CD8-positive, alpha-beta T cell (primary cell): ENCODE measurements at regions of chr14 and their contacts with region 1.

Region 1: DNA sequence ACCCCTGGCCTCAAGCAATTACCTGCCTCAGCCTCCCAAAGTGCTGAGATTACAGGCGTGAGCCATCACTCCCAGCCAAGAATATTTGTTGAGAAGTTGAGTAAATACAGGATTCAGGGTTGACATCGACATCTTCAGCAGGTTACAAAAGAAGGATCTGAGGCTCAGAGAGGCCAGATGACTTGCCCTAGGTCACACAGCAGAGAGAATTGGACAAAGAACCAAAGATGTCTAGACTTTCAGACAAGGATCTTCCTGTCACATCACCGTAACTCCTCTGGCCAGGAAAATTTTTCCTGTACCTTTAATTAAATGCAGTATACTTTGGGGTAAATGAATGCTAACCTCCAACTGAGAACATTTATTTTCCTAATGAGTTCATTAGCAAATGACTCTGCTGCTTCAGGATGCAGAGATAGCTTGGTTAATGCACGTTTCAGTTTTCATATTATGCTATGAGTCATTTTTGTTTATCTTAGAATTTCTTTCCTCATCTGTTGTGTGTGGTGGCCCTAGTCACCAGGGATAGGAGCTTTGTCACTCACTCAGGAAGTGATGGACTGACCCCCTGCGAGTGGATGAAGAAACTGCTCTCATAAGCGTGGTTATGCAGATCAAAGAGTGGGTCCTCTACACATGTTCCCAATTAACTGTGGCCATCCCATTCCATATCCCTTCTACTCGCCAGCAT is 9.0 kb downstream of the TC2N start:
- DNase-seq: peak in 2 of 9 experiments; percentile 32 to 47
- ATAC-seq: peak; percentile 55
- H3K4me3 ChIP-seq: no peak overlapping the region
- H3K4me3 Mint-ChIP-seq: peak overlapping the region; percentile 38
- H3K27ac ChIP-seq: peak overlapping the region in 1 of 2 experiments; percentile 56
- H3K27ac Mint-ChIP-seq: peak overlapping the region; percentile 89
- H3K4me1 ChIP-seq: peaks cover 96% of the 10 kb centered on the region
- H3K4me1 Mint-ChIP-seq: peaks cover 86% of the 10 kb centered on the region
- H3K27me3 ChIP-seq: no peaks in the 10 kb centered on the region
- H3K27me3 Mint-ChIP-seq: no peaks in the 10 kb centered on the region
- CTCF ChIP-seq: no peak

Region 2: DNA sequence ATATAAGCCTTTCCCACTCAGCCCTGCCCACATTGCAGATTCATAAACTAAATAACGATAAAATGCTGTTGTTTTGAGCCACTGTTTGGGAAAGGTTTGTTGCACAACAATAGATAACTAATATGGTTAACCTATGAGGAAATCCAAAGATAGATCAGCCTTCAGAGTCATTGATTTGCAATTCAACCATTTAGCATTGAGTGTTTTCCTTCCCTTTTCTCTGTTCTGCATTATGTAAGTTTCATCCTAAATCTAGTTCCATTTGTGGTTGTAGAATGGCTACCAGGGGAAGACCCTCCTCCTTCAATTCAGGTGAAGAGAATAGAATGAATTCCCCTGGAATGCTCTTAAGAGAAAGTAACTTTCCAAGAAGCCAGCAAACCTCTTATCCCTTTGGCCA is 10.7 kb before region 1 on chr14:
- CTCF ChIA-PET with region 1: interaction called, 4 read pairs
- POLR2A ChIA-PET with region 1: interaction called, 17 read pairs
- intact Hi-C with region 1: loop called in 1 of 2 experiments (anchors 1 kb)
- DNase-seq: no peak
- ATAC-seq: no peak
- H3K4me3 ChIP-seq: no peak overlapping the region
- H3K4me3 Mint-ChIP-seq: no peak overlapping the region
- H3K27ac ChIP-seq: no peak overlapping the region
- H3K27ac Mint-ChIP-seq: peak overlapping the region; percentile 16
- H3K4me1 ChIP-seq: no peaks in the 10 kb centered on the region
- H3K4me1 Mint-ChIP-seq: peaks cover 62% of the 10 kb centered on the region
- H3K27me3 ChIP-seq: no peaks in the 10 kb centered on the region
- H3K27me3 Mint-ChIP-seq: no peaks in the 10 kb centered on the region
- CTCF ChIP-seq: no peak

Region 3: GRCh38 chr14:91953170-91953985 is 95.0 kb after region 1 on chr14:
- CTCF ChIA-PET with region 1: no interaction called
- POLR2A ChIA-PET with region 1: no interaction called
- intact Hi-C with region 1: no loop called
- DNase-seq: no peak
- ATAC-seq: no peak
- H3K4me3 ChIP-seq: no peak overlapping the region
- H3K4me3 Mint-ChIP-seq: no peak overlapping the region
- H3K27ac ChIP-seq: no peak overlapping the region
- H3K27ac Mint-ChIP-seq: no peak overlapping the region
- H3K4me1 ChIP-seq: no peaks in the 10 kb centered on the region
- H3K4me1 Mint-ChIP-seq: peaks cover under 1% of the 10 kb centered on the region
- H3K27me3 ChIP-seq: no peaks in the 10 kb centered on the region
- H3K27me3 Mint-ChIP-seq: peaks cover 3% of the 10 kb centered on the region
- CTCF ChIP-seq: no peak